PC-9 (cell line): ENCODE measurements at regions of chr11 and their contacts with region 1.

Region 1: GRCh38 chr11:3121931-3122774 is 43.0 kb downstream of the OSBPL5 start:
- DNase-seq: no peak
- H3K4me3 ChIP-seq: no peak overlapping the region
- H3K27ac ChIP-seq: no peak overlapping the region
- H3K4me1 ChIP-seq: 0 out of 2 replicates have a peak, but pooled peaks cover 5% of the 10 kb centered on the region
- H3K27me3 ChIP-seq: no peaks in the 10 kb centered on the region
- CTCF ChIP-seq: no peak

Region 2: GRCh38 chr11:2945031-2945756 is 177.0 kb before region 1 on chr11:
- CTCF ChIA-PET with region 1: no interaction called
- POLR2A ChIA-PET with region 1: no interaction called
- intact Hi-C with region 1: no loop called
- DNase-seq: no peak
- H3K4me3 ChIP-seq: no peak overlapping the region
- H3K27ac ChIP-seq: no peak overlapping the region
- H3K4me1 ChIP-seq: peaks cover 17% of the 10 kb centered on the region
- H3K27me3 ChIP-seq: no peaks in the 10 kb centered on the region
- CTCF ChIP-seq: no peak

Region 3: GRCh38 chr11:3021125-3021524 is 101.0 kb before region 1 on chr11:
- CTCF ChIA-PET with region 1: no interaction called
- POLR2A ChIA-PET with region 1: no interaction called
- intact Hi-C with region 1: no loop called
- DNase-seq: peak; percentile 33 to 43
- H3K4me3 ChIP-seq: no peak overlapping the region
- H3K27ac ChIP-seq: no peak overlapping the region
- H3K4me1 ChIP-seq: no peaks in the 10 kb centered on the region; the same call in 1 of the 2 replicates
- H3K27me3 ChIP-seq: no peaks in the 10 kb centered on the region
- CTCF ChIP-seq: peak; percentile 52

Region 4: DNA sequence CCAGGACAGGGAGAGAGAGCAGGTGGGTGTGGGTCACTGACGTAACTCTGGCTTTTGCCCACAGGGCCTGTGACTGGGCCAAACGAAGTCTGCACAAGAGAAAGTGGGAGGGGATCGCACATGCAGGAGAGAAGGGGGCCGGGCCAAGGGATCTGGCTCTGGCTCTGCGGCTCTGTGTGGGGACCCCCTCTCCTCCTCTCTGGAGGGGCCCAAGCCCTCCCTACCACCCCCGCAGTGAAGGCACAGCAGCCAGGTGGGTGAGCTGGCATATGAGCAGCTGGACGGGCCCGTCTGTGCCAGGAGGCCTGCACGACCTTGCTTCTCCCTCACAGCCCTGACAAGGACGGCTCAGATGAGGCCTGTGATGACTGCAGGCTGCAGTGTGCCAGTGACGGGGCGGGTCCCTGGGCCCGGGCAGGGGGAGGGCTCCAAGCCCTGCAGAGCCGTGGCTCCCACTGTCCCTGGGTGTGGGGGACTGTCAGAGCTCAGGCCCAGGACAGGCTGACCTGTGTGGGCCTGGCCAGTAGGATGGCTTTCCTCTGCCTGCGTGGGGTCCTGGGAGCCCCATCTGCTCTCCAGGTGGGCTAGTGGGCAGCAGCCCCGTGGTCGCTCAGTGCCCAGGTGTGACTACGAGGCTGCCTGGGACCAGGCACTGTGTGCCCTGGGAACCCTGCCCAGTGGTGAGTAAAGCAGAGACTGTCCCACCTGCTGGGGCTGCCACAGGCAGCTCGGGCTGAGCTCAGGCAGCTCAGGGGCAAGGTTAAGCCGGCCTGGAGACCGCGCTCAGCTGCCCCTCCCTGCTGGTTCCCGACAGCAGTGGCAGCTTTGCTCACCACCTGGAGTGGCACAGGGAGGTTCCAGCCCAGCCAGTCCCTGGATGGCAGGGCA is 74.3 kb after region 1 on chr11:
- CTCF ChIA-PET with region 1: no interaction called
- POLR2A ChIA-PET with region 1: interaction called, 12 read pairs
- intact Hi-C with region 1: no loop called
- DNase-seq: no peak
- H3K4me3 ChIP-seq: no peak overlapping the region
- H3K27ac ChIP-seq: no peak overlapping the region
- H3K4me1 ChIP-seq: no peaks in the 10 kb centered on the region
- H3K27me3 ChIP-seq: peaks cover 24% of the 10 kb centered on the region
- CTCF ChIP-seq: no peak